Activated CD4-positive, alpha-beta memory T cell treated with anti-CD3 and anti-CD28 coated beads for 36 hours (primary cell): ENCODE measurements at regions of chr1 and their contacts with region 1.

Region 1: DNA sequence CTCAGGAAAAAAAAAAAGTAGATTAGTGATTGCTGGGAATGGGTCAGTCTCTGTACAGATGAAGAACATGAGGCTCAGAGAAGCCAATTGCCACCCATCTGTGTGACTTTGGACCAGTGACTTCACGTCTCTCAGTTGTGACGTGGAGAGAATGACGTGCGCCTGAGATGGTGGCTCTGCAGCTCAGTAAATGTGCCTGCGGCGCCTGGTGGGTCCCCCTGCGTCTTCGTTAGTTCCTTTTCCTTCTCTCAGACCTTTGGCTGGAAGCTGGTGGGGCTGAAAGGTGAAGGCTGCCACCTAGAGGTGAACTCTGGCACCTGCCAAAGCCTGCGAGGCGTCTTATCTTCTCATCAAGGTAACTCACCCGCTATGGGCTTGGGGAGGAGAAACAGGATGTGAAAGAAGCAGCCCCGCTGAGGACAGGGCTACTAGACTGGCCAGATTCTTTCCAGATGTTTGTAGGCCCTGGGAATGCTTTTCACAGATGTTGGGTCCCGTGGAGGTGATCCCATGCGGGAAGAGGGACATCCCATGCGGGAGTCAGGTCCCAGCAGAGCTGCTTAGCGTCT is 8.7 kb upstream of the E2F2 start:
- DNase-seq: peak; percentile 96
- H3K4me3 Mint-ChIP-seq: peak overlapping the region; percentile 55
- H3K27ac Mint-ChIP-seq: peak overlapping the region; percentile 62
- H3K4me1 Mint-ChIP-seq: peaks cover 17% of the 10 kb centered on the region
- H3K27me3 Mint-ChIP-seq: no peaks in the 10 kb centered on the region

Region 2: GRCh38 chr1:23484253-23485001 is 55.4 kb before region 1 on chr1:
- CTCF ChIA-PET with region 1: interaction called, 19 read pairs
- POLR2A ChIA-PET with region 1: no interaction called
- intact Hi-C with region 1: no loop called
- DNase-seq: peak; percentile 94
- H3K4me3 Mint-ChIP-seq: peak overlapping the region; percentile 70
- H3K27ac Mint-ChIP-seq: no peak overlapping the region
- H3K4me1 Mint-ChIP-seq: peaks cover 26% of the 10 kb centered on the region
- H3K27me3 Mint-ChIP-seq: peaks cover 21% of the 10 kb centered on the region

Region 3: GRCh38 chr1:23489842-23490241 is 49.9 kb before region 1 on chr1:
- CTCF ChIA-PET with region 1: interaction called, 274 read pairs
- POLR2A ChIA-PET with region 1: no interaction called
- intact Hi-C with region 1: no loop called
- DNase-seq: no peak
- H3K4me3 Mint-ChIP-seq: no peak overlapping the region
- H3K27ac Mint-ChIP-seq: no peak overlapping the region
- H3K4me1 Mint-ChIP-seq: peaks cover 3% of the 10 kb centered on the region
- H3K27me3 Mint-ChIP-seq: peaks cover 3% of the 10 kb centered on the region

Region 4: DNA sequence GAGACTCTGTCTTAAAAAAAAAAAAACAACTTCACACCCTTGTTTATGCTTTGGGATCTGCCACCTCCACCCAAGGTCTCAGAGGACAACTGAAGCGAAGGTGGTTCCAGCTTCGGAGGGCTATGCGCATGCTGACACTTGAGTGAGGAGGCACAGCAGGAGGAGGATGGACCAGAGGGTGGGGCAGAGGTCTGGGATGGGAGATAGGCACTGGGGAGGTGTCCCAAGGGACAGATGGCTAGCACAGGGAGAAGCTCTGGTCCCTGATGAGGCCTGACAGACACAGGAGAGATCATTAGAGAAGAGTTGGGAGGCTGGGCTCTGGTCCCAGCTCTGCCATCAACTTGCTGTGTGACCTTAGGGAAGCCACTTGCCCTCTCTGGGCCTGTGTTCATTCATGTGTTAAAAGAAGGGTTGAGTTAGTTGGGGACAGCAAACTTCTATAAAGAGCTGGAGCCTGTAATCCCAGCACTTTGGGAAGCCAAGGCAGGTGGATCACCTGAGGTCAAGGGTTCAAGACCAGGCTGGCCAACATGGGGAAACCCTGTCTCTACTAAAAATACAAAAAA is 25.6 kb before region 1 on chr1:
- CTCF ChIA-PET with region 1: interaction called, 11 read pairs
- POLR2A ChIA-PET with region 1: no interaction called
- intact Hi-C with region 1: no loop called
- DNase-seq: no peak
- H3K4me3 Mint-ChIP-seq: no peak overlapping the region
- H3K27ac Mint-ChIP-seq: no peak overlapping the region
- H3K4me1 Mint-ChIP-seq: no peaks in the 10 kb centered on the region
- H3K27me3 Mint-ChIP-seq: no peaks in the 10 kb centered on the region